A549 (cell line): ENCODE measurements at regions of chr14 and their contacts with region 1.

Region 1: GRCh38 chr14:38994731-38995130 is 108.3 kb downstream of the SEC23A start:
- DNase-seq: no peak
- ATAC-seq: no peak
- H3K4me3 ChIP-seq: no peak overlapping the region
- H3K27ac ChIP-seq: no peak overlapping the region
- H3K4me1 ChIP-seq: no peaks in the 10 kb centered on the region
- CTCF ChIP-seq: no peak
- EP300 ChIP-seq: no peak
- POLR2A ChIP-seq: no peak
- RAD21 ChIP-seq: no peak

Region 2: GRCh38 chr14:39015360-39015961 is 20.7 kb after region 1 on chr14:
- CTCF ChIA-PET with region 1: interaction called, 10 read pairs
- POLR2A ChIA-PET with region 1: no interaction called
- DNase-seq: peak; percentile 46 to 64
- ATAC-seq: peak in 1 of 2 experiments; percentile 73; a peak in 3 of 6 replicates
- H3K4me3 ChIP-seq: no peak overlapping the region
- H3K27ac ChIP-seq: no peak overlapping the region
- H3K4me1 ChIP-seq: no peaks in the 10 kb centered on the region
- CTCF ChIP-seq: peak; percentile 78
- EP300 ChIP-seq: no peak
- POLR2A ChIP-seq: no peak
- RAD21 ChIP-seq: peak; percentile 68 to 77